A673 (cell line): ENCODE measurements at regions of chr5 and their contacts with region 1.

Region 1: GRCh38 chr5:177473461-177474001 is at the start of gene DBN1:
- DNase-seq: peak; percentile 72
- H3K4me3 ChIP-seq: peak within 1 kb of the TSS; percentile 96
- H3K27ac ChIP-seq: peak within 1 kb of the TSS; percentile 86
- H3K4me1 ChIP-seq: peaks cover 27% of the 10 kb centered on the region
- H3K27me3 ChIP-seq: no peaks in the 10 kb centered on the region
- CTCF ChIP-seq: no peak
- total RNA-seq, gene DBN1: 271 and 286 TPM in 2 replicates

Region 2: DNA sequence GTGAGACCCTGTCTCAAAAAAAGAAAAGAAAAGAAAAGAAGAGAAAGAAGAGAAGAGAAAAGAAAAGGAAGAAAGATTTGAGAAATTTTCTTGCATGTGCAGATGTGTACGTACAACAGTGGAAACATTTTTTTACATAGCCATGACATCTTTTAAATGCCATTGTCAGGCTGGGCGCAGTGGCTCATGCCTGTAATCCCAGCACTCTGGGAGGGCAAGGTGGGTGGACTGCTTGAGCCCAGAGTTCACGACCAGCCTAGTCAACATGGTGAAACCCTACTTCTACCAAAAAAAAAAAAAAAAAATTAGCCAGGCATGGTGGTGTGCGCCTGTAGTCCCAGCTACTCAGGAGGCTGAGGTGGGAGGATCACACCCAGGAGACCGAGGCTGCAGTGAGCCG is 128.6 kb before region 1 on chr5:
- CTCF ChIA-PET with region 1: no interaction called
- POLR2A ChIA-PET with region 1: no interaction called
- intact Hi-C with region 1: no loop called
- DNase-seq: no peak
- H3K4me3 ChIP-seq: no peak overlapping the region
- H3K27ac ChIP-seq: no peak overlapping the region
- H3K4me1 ChIP-seq: peaks cover 5% of the 10 kb centered on the region
- H3K27me3 ChIP-seq: no peaks in the 10 kb centered on the region
- CTCF ChIP-seq: no peak

Region 3: DNA sequence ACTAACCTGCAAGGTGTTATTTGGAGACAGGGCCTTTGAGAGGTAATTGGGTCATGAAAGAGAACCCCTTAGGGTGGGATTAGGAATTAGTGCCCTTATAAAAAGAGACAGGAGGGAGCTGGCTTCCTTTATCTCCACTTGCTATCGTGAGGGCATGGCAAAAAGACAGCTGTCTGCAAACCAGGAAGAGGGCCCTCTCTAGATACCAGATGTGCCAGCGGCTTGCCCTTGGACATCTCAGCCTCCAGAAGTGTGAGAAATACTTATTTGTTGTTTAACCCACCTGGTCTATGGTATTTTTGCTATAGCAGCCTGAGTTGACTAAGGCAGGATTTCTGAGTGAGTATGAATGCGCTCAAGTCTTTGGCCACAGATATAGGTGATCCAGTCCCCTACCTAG is 116.8 kb before region 1 on chr5:
- CTCF ChIA-PET with region 1: no interaction called
- POLR2A ChIA-PET with region 1: interaction called, 10 read pairs
- intact Hi-C with region 1: no loop called
- DNase-seq: no peak
- H3K4me3 ChIP-seq: no peak overlapping the region
- H3K27ac ChIP-seq: no peak overlapping the region
- H3K4me1 ChIP-seq: peaks cover 4% of the 10 kb centered on the region
- H3K27me3 ChIP-seq: no peaks in the 10 kb centered on the region
- CTCF ChIP-seq: no peak